ENCODE measurements at regions of chr14 and their contacts with region 1.

Region 1: GRCh38 chr14:74290415-74290814 is 12.3 kb downstream of the ABCD4 start:
- DNase-seq: no peak
- H3K4me3 ChIP-seq: no peak overlapping the region
- H3K27ac ChIP-seq: no peak overlapping the region
- H3K4me1 ChIP-seq: no peaks in the 10 kb centered on the region
- H3K27me3 ChIP-seq: no peaks in the 10 kb centered on the region
- CTCF ChIP-seq: peak; percentile 79

Region 2: GRCh38 chr14:74109369-74109768 is 181.0 kb before region 1 on chr14:
- CTCF ChIA-PET with region 1: no interaction called
- POLR2A ChIA-PET with region 1: no interaction called
- intact Hi-C with region 1: loop called (anchors 1 kb)
- DNase-seq: no peak
- H3K4me3 ChIP-seq: no peak overlapping the region
- H3K27ac ChIP-seq: no peak overlapping the region
- H3K4me1 ChIP-seq: no peaks in the 10 kb centered on the region
- H3K27me3 ChIP-seq: no peaks in the 10 kb centered on the region
- CTCF ChIP-seq: no peak

Region 3: GRCh38 chr14:74217672-74218448 is 72.6 kb before region 1 on chr14:
- CTCF ChIA-PET with region 1: interaction called, 7 read pairs
- POLR2A ChIA-PET with region 1: no interaction called
- intact Hi-C with region 1: loop called (anchors 1 kb)
- DNase-seq: peak; percentile 58 to 92
- H3K4me3 ChIP-seq: peak overlapping the region; percentile 10; the same call in 1 of the 2 replicates
- H3K27ac ChIP-seq: no peak overlapping the region
- H3K4me1 ChIP-seq: no peaks in the 10 kb centered on the region
- H3K27me3 ChIP-seq: peaks cover 40% of the 10 kb centered on the region
- CTCF ChIP-seq: peak; percentile 96

Region 4: GRCh38 chr14:74249433-74250375 is 40.7 kb before region 1 on chr14:
- CTCF ChIA-PET with region 1: interaction called, 3 read pairs
- POLR2A ChIA-PET with region 1: no interaction called
- intact Hi-C with region 1: loop called (anchors 2 kb)
- DNase-seq: no peak
- H3K4me3 ChIP-seq: no peak overlapping the region
- H3K27ac ChIP-seq: no peak overlapping the region
- H3K4me1 ChIP-seq: no peaks in the 10 kb centered on the region
- H3K27me3 ChIP-seq: peaks cover 4% of the 10 kb centered on the region
- CTCF ChIP-seq: no peak

Region 5: DNA sequence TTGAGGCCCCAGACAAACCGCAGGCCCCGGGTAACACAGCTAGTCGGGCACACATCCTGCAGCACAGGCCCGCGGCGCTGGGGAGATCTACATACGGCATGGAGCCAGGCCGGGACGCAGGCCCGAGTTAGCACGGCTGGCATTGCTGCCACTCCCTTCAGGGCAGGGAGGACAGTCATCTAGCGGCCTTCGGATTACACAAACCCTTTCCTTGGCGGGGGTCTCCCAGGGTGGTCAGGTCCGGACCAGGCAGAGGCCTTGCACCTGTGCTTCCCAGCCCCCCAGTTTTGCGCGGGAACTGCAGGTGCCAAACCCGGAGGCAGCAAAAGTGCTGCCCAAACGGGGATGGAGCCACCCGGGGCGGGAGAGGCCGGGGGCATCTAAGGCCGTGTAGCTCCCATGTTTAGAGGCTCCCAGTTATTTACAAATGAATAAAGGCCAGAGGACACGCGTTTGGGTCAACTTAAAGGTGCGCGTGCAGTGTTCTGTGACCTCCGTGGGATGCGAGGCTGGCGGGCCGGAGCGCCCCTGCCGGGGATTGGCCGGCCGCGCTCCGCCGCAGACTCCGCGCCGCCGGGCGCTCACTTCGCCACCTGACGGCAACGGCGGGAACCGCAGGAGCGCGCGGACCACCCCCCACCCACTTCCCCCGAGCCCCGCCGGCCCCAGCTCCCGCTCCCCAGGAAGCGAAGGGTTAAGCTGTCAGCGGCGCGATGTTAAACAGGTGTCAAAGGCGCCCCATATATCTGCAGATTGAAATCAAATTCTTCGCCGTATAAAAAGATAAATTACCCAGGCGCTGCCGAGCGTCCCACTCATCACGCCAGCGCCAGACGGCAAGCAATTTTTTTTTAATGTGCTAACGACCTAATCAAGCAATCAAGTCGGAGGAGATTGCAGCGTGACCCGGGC is 33.1 kb before region 1 on chr14:
- CTCF ChIA-PET with region 1: interaction called, 7 read pairs
- POLR2A ChIA-PET with region 1: no interaction called
- intact Hi-C with region 1: loop called (anchors 2 kb)
- DNase-seq: peak in 1 of 2 experiments; percentile 58
- H3K4me3 ChIP-seq: peak overlapping the region; percentile 76
- H3K27ac ChIP-seq: no peak overlapping the region
- H3K4me1 ChIP-seq: 0 out of 2 replicates have a peak, but pooled peaks cover 6% of the 10 kb centered on the region
- H3K27me3 ChIP-seq: peaks cover 22% of the 10 kb centered on the region
- CTCF ChIP-seq: peak; percentile 89

Region 6: GRCh38 chr14:74302634-74303577 is 12.5 kb after region 1 on chr14 and contains the start of gene ABCD4:
- CTCF ChIA-PET with region 1: interaction called, 4 read pairs
- POLR2A ChIA-PET with region 1: interaction called, 15 read pairs
- intact Hi-C with region 1: no loop called
- DNase-seq: peak; percentile 96 to 100
- H3K4me3 ChIP-seq: peak within 1 kb of the TSS; percentile 61
- H3K27ac ChIP-seq: peak within 1 kb of the TSS; percentile 35
- H3K4me1 ChIP-seq: peaks cover 16% of the 10 kb centered on the region
- H3K27me3 ChIP-seq: no peaks in the 10 kb centered on the region
- CTCF ChIP-seq: peak; percentile 66; the same call in 1 of the 2 replicates
- total RNA-seq, gene ABCD4: 150 and 179 TPM in 2 replicates

Region 7: DNA sequence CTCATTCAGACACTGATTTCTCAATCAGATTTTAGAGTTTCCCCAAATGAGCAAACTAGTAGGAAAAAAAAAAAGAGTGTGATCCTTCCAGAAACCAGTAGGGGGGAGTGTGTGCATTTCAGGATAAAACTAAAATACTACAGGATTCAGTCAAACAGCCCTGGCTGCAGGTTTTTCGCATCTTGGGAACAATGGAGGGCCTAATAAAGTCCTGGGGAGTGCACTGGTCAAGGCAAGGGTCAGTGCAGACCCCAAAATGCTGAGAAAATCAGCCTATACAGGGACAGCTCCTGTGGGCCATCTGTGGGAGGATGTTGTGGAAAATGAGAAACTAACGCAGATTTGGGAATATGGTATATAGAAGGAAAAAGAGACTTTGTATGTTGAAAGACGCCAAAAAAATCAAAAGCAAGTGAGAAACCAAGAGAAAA is 34.5 kb after region 1 on chr14:
- CTCF ChIA-PET with region 1: interaction called, 13 read pairs
- POLR2A ChIA-PET with region 1: no interaction called
- intact Hi-C with region 1: no loop called
- DNase-seq: peak in 1 of 2 experiments; percentile 39
- H3K4me3 ChIP-seq: no peak overlapping the region
- H3K27ac ChIP-seq: no peak overlapping the region
- H3K4me1 ChIP-seq: no peaks in the 10 kb centered on the region
- H3K27me3 ChIP-seq: no peaks in the 10 kb centered on the region
- CTCF ChIP-seq: peak; percentile 95

Measured in PC-9 (cell line).